GM13977 (cell line): ENCODE measurements at regions of chr2 and their contacts with region 1.

Region 1: GRCh38 chr2:234135720-234136221 is 85.3 kb downstream of the SPP2 start:
- DNase-seq: peak; percentile 58
- CTCF ChIP-seq: peak; percentile 71

Region 2: DNA sequence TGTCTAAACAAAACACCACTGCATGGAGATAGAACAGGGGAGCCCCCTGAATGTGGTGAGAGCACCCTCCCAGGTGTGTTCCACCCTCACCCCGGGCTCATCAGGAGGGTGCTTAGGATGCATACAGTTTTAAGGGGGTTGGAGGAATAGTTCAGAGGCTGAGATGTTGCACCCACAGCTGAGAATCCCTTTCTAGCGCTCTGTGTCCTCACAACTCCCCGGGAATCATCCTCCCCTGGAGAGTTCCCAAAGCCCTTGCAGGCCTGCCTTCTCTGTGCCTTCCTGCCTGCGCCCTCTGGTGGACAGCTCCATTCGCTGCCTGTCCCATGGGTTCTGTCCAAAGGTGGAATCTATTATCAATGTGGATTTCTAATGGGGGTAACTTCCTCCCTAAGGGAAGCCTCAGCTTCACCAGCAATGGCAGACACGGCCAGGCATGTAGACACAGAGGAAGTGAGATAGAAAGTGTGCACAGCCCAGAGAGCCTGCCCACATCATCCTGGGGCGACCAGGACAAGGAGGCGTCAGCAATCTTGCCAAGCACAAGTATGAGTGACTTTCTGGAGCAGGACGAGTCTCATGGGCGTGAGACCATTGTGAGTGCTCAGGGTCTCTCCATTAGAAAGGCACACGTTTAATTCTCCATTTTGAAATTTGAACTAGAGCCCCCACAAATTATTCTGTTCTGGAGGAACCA is 424.3 kb before region 1 on chr2:
- in situ Hi-C with region 1: no loop called
- DNase-seq: peak; percentile 49
- CTCF ChIP-seq: peak; percentile 89

Region 3: GRCh38 chr2:234231460-234231859 is 95.7 kb after region 1 on chr2:
- in situ Hi-C with region 1: no loop called
- DNase-seq: no peak
- CTCF ChIP-seq: no peak

Region 4: GRCh38 chr2:234288974-234289455 is 153.2 kb after region 1 on chr2:
- in situ Hi-C with region 1: loop called (anchors 10 kb)
- DNase-seq: peak; percentile 46
- CTCF ChIP-seq: peak; percentile 84